Activated CD8-positive, alpha-beta memory T cell treated with anti-CD3 and anti-CD28 coated beads, Interleukin-2, amount 10 ng/mL, durations not matched to agents 7 days and 5 days (primary cell): ENCODE measurements at regions of chr2 and their contacts with region 1.

Region 1: GRCh38 chr2:38959938-38960608 is 70.4 kb downstream of the ARHGEF33 start:
- DNase-seq: peak; percentile 84
- ATAC-seq: peak; percentile 100
- H3K4me3 Mint-ChIP-seq: peak overlapping the region; percentile 44
- H3K27ac Mint-ChIP-seq: no peak overlapping the region
- H3K4me1 Mint-ChIP-seq: peaks cover 7% of the 10 kb centered on the region
- H3K27me3 Mint-ChIP-seq: peaks cover 49% of the 10 kb centered on the region

Region 2: GRCh38 chr2:38465789-38466127 is 494.3 kb before region 1 on chr2:
- CTCF ChIA-PET with region 1: no interaction called
- DNase-seq: no peak
- ATAC-seq: peak; percentile 58
- H3K4me3 Mint-ChIP-seq: no peak overlapping the region
- H3K27ac Mint-ChIP-seq: no peak overlapping the region
- H3K4me1 Mint-ChIP-seq: peaks cover 4% of the 10 kb centered on the region
- H3K27me3 Mint-ChIP-seq: peaks cover 24% of the 10 kb centered on the region

Region 3: GRCh38 chr2:38552259-38552658 is 407.8 kb before region 1 on chr2:
- CTCF ChIA-PET with region 1: no interaction called
- DNase-seq: no peak
- ATAC-seq: peak; percentile 20
- H3K4me3 Mint-ChIP-seq: no peak overlapping the region
- H3K27ac Mint-ChIP-seq: no peak overlapping the region
- H3K4me1 Mint-ChIP-seq: peaks cover 6% of the 10 kb centered on the region
- H3K27me3 Mint-ChIP-seq: no peaks in the 10 kb centered on the region

Region 4: GRCh38 chr2:38947240-38948239 is 12.5 kb before region 1 on chr2:
- CTCF ChIA-PET with region 1: interaction called, 15 read pairs
- DNase-seq: peak; percentile 83
- ATAC-seq: peak; percentile 85
- H3K4me3 Mint-ChIP-seq: no peak overlapping the region
- H3K27ac Mint-ChIP-seq: no peak overlapping the region
- H3K4me1 Mint-ChIP-seq: no peaks in the 10 kb centered on the region
- H3K27me3 Mint-ChIP-seq: peaks cover 6% of the 10 kb centered on the region

Region 5: DNA sequence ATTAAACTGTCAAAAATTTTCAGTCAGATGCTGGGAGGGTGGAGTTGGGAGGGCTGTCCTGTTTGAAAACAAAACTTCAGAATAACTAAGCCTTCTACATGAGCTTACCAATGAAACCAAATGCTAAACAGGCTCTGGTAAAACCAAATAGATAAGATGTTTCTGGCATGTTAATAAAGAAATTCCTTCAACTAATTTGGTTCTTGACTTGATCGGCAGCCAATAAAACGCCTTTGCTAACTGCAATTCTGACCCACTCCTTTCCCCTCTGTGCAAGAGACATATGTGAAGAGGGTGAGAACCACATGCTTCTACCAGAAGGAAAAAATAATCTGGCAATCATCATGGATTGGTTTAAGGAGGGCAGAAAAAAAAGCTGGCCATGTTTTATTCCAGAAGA is 456.1 kb after region 1 on chr2:
- CTCF ChIA-PET with region 1: no interaction called
- DNase-seq: no peak
- ATAC-seq: no peak
- H3K4me3 Mint-ChIP-seq: no peak overlapping the region
- H3K27ac Mint-ChIP-seq: no peak overlapping the region
- H3K4me1 Mint-ChIP-seq: peaks cover 10% of the 10 kb centered on the region
- H3K27me3 Mint-ChIP-seq: no peaks in the 10 kb centered on the region